Activated B cell treated with CpG ODN at 0.5 μM for 24 hours (primary cell): ENCODE measurements at regions of chr13 and their contacts with region 1.

Region 1: DNA sequence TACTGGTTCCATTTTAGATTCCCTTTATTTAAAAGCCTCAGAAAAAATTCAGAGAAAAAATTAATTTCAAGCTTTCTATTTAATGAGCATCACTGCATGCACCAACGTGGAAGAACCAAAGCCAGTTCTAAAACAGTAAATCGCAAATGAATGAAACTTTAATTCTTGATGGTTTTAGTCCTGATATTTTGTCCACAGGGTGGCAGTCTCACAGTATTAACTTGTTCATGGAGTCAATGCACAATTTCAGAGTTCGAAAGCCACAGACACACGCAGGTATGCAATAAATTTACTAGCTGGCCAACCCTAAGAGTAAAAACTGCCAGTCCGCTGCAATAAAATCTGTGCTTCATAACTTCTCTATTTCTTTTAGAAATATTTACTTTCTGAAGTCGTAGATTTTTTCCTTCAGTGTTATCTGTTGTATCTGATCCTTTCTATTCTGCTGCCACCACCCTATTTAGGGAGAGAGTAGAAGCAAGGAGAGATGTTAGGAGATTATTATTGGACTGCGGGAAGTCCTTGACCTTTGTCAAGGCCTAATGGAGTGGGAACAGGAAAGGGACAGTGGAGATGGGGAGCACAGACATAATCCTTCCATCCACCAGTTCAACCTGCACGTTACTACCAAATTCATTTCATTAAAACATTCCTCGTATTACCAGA is 7.0 kb upstream of the WBP4 start:
- DNase-seq: no peak
- ATAC-seq: peak; percentile 33
- H3K4me3 Mint-ChIP-seq: peak overlapping the region; percentile 68
- H3K27ac Mint-ChIP-seq: peak overlapping the region; percentile 80
- H3K4me1 Mint-ChIP-seq: peaks cover 58% of the 10 kb centered on the region
- H3K27me3 Mint-ChIP-seq: no peaks in the 10 kb centered on the region
- CTCF ChIP-seq: peak; percentile 76

Region 2: DNA sequence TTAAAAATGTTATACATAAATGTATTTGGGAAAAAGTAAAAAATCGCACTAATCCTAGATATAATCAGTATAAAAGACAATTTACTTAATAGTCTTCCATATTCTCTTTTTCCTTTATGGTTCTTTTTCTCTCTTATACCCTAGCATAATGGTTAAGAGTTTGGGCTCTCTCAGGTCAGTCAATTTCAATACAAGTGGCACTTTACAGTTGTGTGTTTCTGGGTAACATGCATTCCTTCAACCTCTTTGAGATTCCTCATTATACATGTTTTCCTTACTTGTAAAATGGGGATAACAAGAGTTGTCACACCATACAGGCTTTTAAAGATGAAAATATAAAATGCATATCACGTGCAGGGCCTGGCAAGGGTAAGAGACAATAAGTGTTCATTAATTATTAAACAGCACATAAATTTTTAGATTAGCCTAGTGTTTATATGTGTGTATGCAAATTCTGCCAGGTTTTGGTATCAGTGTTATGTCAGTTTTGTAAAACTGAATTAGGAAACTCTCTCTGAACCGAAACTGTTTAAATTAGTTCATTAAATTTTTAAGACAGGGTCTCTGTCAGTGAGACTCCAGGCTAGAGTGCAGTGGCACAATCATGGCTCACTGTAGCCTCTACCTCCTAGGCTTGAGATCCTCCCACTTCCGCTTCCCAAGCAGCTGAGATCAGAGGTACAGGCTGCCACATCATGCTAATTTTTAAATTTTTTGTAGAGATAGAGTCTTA is 85.0 kb before region 1 on chr13:
- CTCF ChIA-PET with region 1: interaction called, 36 read pairs
- POLR2A ChIA-PET with region 1: interaction called, 5 read pairs
- intact Hi-C with region 1: loop called (anchors 1 kb)
- DNase-seq: no peak
- ATAC-seq: peak; percentile 72
- H3K4me3 Mint-ChIP-seq: peak overlapping the region; percentile 54
- H3K27ac Mint-ChIP-seq: peak overlapping the region; percentile 76
- H3K4me1 Mint-ChIP-seq: peaks cover 99% of the 10 kb centered on the region
- H3K27me3 Mint-ChIP-seq: no peaks in the 10 kb centered on the region
- CTCF ChIP-seq: no peak

Region 3: GRCh38 chr13:41019011-41019487 is 35.3 kb before region 1 on chr13 and contains the start of gene ELF1:
- CTCF ChIA-PET with region 1: interaction called, 11 read pairs
- POLR2A ChIA-PET with region 1: interaction called, 118 read pairs
- intact Hi-C with region 1: loop called (anchors 1 kb)
- DNase-seq: peak; percentile 26
- ATAC-seq: peak; percentile 87
- H3K4me3 Mint-ChIP-seq: peak within 1 kb of the TSS; percentile 94
- H3K27ac Mint-ChIP-seq: peak within 1 kb of the TSS; percentile 99
- H3K4me1 Mint-ChIP-seq: peaks cover 46% of the 10 kb centered on the region
- H3K27me3 Mint-ChIP-seq: no peaks in the 10 kb centered on the region
- CTCF ChIP-seq: no peak
- total RNA-seq, gene ELF1: 129 and 136 TPM in 2 replicates

Region 4: GRCh38 chr13:41034881-41035280 is 19.5 kb before region 1 on chr13:
- CTCF ChIA-PET with region 1: interaction called, 5 read pairs
- POLR2A ChIA-PET with region 1: no interaction called
- intact Hi-C with region 1: loop called (anchors 2 kb)
- DNase-seq: no peak
- ATAC-seq: peak; percentile 28
- H3K4me3 Mint-ChIP-seq: no peak overlapping the region
- H3K27ac Mint-ChIP-seq: no peak overlapping the region
- H3K4me1 Mint-ChIP-seq: peaks cover 22% of the 10 kb centered on the region
- H3K27me3 Mint-ChIP-seq: no peaks in the 10 kb centered on the region
- CTCF ChIP-seq: no peak